ENCODE measurements at regions of chr12 and their contacts with region 1.

Region 1: DNA sequence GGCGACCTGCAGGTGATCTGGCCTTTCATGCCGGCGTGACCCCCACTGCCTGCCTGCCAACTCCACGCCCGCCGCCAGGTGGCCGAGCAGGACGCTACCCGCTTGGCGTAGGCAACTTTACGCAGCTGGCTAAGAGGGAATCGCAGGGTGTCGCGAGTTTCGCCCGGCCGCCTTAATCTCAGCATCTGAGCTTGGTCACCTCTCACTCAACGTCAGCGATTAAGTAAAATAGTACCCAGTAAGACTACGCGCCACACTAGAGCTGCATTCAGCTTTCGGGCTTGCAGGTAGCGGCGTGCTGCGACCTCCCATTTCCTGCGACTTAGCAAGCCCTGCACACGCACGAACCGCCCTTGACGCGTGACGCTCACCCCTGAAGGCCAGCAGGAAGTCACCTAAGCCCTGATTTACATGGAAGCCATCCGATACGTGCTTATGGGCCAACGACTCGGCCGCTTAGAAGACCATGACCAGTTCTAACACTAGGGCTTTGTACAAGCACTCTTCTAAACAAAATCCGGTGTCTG is 33.2 kb downstream of the WBP11 start:
- DNase-seq: peak; percentile 78
- H3K4me3 Mint-ChIP-seq: peak overlapping the region; percentile 95
- H3K27ac Mint-ChIP-seq: peak overlapping the region; percentile 98
- H3K4me1 Mint-ChIP-seq: peaks cover 47% of the 10 kb centered on the region
- H3K27me3 Mint-ChIP-seq: no peaks in the 10 kb centered on the region

Region 2: GRCh38 chr12:13100882-13101769 is 1668.9 kb before region 1 on chr12:
- intact Hi-C with region 1: loop called (anchors 5 kb)
- DNase-seq: peak; percentile 89
- H3K4me3 Mint-ChIP-seq: peak overlapping the region; percentile 71
- H3K27ac Mint-ChIP-seq: peak overlapping the region; percentile 75
- H3K4me1 Mint-ChIP-seq: peaks cover 47% of the 10 kb centered on the region
- H3K27me3 Mint-ChIP-seq: peaks cover 5% of the 10 kb centered on the region

Region 3: GRCh38 chr12:14257734-14258574 is 512.1 kb before region 1 on chr12:
- intact Hi-C with region 1: loop called (anchors 1 kb)
- DNase-seq: peak; percentile 84
- H3K4me3 Mint-ChIP-seq: peak overlapping the region; percentile 60
- H3K27ac Mint-ChIP-seq: peak overlapping the region; percentile 95
- H3K4me1 Mint-ChIP-seq: peaks cover 48% of the 10 kb centered on the region
- H3K27me3 Mint-ChIP-seq: no peaks in the 10 kb centered on the region

Region 4: DNA sequence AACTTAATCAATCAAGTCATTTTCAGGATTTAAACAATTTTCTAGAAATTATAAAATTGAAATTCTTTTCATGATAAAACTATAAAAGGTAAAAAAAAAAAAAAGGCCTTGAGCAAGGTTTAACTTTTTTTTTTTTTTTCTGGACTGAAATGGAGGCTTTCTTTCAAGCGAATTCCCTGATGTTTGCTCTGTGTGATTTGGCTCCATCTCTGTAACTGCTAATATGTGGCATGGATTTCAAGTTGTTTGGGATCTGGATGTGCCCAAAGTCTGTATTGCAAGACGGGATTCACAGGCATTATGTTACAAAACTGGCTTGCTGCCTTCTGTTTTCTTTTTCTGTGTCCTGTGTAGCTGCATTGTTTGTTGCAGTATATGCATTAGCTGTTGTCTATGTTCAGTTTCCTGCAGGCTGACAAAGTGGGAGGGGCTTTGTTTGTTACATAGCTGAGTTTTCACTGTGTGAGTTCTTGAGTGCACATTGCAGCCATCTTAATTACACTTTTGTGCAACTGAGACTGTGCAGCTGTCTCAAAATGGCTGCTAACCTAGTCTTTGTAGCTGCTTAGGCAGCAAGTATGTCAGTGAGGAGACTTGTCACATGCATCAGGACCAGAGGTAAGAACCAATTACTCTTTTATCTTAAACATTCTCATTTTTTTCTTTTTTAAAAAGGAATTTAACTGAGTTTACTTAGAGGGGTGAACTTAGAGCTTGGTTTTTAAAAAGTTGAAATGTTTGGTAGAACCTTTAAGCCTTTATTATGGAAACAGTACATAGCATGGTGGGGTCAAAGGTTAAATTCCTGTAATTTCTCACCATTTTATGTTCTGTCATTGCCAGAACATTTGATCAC is 385.0 kb before region 1 on chr12:
- intact Hi-C with region 1: loop called (anchors 5 kb)
- DNase-seq: peak; percentile 72
- H3K4me3 Mint-ChIP-seq: peak overlapping the region; percentile 87
- H3K27ac Mint-ChIP-seq: peak overlapping the region; percentile 86
- H3K4me1 Mint-ChIP-seq: peaks cover 45% of the 10 kb centered on the region
- H3K27me3 Mint-ChIP-seq: no peaks in the 10 kb centered on the region

Region 5: GRCh38 chr12:14741153-14741552 is 28.9 kb before region 1 on chr12:
- intact Hi-C with region 1: no loop called
- DNase-seq: no peak
- H3K4me3 Mint-ChIP-seq: no peak overlapping the region
- H3K27ac Mint-ChIP-seq: no peak overlapping the region
- H3K4me1 Mint-ChIP-seq: no peaks in the 10 kb centered on the region
- H3K27me3 Mint-ChIP-seq: peaks cover 2% of the 10 kb centered on the region

Region 6: DNA sequence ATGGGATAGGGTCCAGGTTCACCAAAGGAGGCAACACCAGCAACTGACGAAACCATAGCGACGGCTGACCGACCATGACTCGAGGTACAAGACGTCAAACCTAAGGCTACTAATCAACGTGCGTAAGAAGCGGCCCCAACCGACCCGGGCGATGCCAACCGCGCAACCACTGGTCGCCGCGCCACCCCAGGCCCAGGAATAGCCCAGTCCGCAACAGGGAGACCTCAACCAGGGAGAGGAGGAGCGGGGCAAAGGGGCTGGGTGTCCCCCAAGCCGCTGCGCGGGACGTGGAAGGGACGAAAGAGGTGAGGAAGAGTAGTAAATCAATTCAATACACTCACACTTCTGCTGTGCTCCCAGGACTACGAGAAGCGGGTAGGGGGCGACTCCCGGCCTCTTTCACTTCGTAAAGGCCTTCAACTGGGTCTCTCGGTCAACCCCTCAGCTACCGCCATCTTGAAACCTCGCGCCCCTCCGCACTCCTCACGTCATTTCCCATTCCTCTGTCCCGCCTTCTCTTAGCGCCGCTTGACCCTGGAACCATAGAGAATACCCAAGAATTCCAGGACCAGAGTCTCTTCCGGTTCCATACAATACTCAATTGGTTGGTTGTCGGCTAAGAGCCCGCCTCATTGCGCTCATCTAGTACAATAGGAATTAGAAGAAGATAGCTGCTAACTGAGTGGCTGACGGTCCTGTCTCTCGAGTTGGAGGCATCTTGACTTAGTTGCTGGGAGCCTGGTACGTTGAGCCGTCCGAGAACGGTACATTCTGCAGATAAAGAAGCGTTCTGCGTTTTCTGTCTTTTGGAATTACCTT is 33.2 kb after region 1 on chr12 and contains the starts of genes C12orf60 and WBP11:
- intact Hi-C with region 1: loop called (anchors 1 kb)
- DNase-seq: peak; percentile 83
- H3K4me3 Mint-ChIP-seq: no peak within 1 kb of the TSS
- H3K27ac Mint-ChIP-seq: no peak within 1 kb of the TSS
- H3K4me1 Mint-ChIP-seq: peaks cover 27% of the 10 kb centered on the region
- H3K27me3 Mint-ChIP-seq: no peaks in the 10 kb centered on the region
- total RNA-seq, gene C12orf60: 2.2 and 2.8 TPM in 2 replicates
- total RNA-seq, gene WBP11: 128 and 134 TPM in 2 replicates

Region 7: GRCh38 chr12:14960548-14961465 is 190.8 kb after region 1 on chr12:
- intact Hi-C with region 1: loop called (anchors 1 kb)
- DNase-seq: peak; percentile 43
- H3K4me3 Mint-ChIP-seq: peak overlapping the region; percentile 96
- H3K27ac Mint-ChIP-seq: peak overlapping the region; percentile 97
- H3K4me1 Mint-ChIP-seq: peaks cover 58% of the 10 kb centered on the region
- H3K27me3 Mint-ChIP-seq: no peaks in the 10 kb centered on the region

Region 8: GRCh38 chr12:15882118-15882971 is 1112.3 kb after region 1 on chr12 and contains the start of gene STRAP:
- intact Hi-C with region 1: loop called (anchors 5 kb)
- DNase-seq: peak; percentile 95
- H3K4me3 Mint-ChIP-seq: peak within 1 kb of the TSS; percentile 93
- H3K27ac Mint-ChIP-seq: peak within 1 kb of the TSS; percentile 96
- H3K4me1 Mint-ChIP-seq: peaks cover 35% of the 10 kb centered on the region
- H3K27me3 Mint-ChIP-seq: no peaks in the 10 kb centered on the region
- total RNA-seq, gene STRAP: 144 TPM in 2 replicates